Naive thymus-derived CD4-positive, alpha-beta T cell (primary cell): ENCODE measurements at regions of chr1 and their contacts with region 1.

Region 1: GRCh38 chr1:209674957-209675564 is at the start of gene G0S2:
- DNase-seq: peak in 3 of 9 donors; percentile 2 to 70 (median 15)
- ATAC-seq: peak; percentile 64
- H3K4me3 ChIP-seq: peak within 1 kb of the TSS; percentile 40
- H3K4me3 Mint-ChIP-seq: peak within 1 kb of the TSS; percentile 47 to 88 (median 80)
- H3K27ac ChIP-seq: no peak within 1 kb of the TSS
- H3K27ac Mint-ChIP-seq: peak within 1 kb of the TSS in 2 of 9 donors; percentile 36 to 73
- H3K4me1 ChIP-seq: peaks cover 10 to 18% of the 10 kb centered on the region in 2 donors
- H3K4me1 Mint-ChIP-seq: peaks cover 27 to 74% (median 43%) of the 10 kb centered on the region in 7 donors
- H3K27me3 ChIP-seq: no peaks in the 10 kb centered on the region
- H3K27me3 Mint-ChIP-seq: peaks cover 27 to 61% (median 55%) of the 10 kb centered on the region in 5 donors
- total RNA-seq, gene G0S2: 17.2 to 128 (median 81.1) TPM in 3 of 5 experiments, not detected in the others

Region 2: DNA sequence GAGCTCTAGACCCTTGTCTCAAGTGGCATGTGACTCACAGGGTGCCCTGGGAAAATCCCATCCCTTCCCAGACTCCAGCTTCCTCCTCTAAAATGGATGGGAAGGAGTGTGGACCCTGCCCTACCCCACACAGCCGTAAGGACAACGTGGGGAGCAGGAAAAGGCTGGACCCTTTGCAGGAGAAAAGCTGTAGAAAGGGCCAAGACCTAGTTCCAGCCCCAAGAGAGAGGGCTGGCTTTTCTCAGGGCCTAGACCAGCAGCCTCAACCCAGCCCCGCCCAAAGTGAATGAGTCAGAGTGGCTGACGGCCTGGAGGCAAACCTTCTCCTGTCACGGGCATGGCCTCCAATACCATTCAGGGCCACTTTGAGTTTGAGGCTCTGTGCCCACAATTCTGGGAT is 23.9 kb before region 1 on chr1:
- CTCF ChIA-PET with region 1: no interaction called
- POLR2A ChIA-PET with region 1: no interaction called
- intact Hi-C with region 1: loop called in 1 of 2 experiments (anchors 2 kb)
- DNase-seq: peak in 1 of 9 donors; percentile 72
- ATAC-seq: peak; percentile 82
- H3K4me3 ChIP-seq: no peak overlapping the region
- H3K4me3 Mint-ChIP-seq: peak overlapping the region in 1 of 10 donors; percentile 50
- H3K27ac ChIP-seq: no peak overlapping the region
- H3K27ac Mint-ChIP-seq: peak overlapping the region in 2 of 9 donors; percentile 12 to 88
- H3K4me1 ChIP-seq: no peaks in the 10 kb centered on the region
- H3K4me1 Mint-ChIP-seq: peaks cover 11 to 69% (median 16%) of the 10 kb centered on the region in 7 donors
- H3K27me3 ChIP-seq: no peaks in the 10 kb centered on the region
- H3K27me3 Mint-ChIP-seq: no peaks in the 10 kb centered on the region

Region 3: DNA sequence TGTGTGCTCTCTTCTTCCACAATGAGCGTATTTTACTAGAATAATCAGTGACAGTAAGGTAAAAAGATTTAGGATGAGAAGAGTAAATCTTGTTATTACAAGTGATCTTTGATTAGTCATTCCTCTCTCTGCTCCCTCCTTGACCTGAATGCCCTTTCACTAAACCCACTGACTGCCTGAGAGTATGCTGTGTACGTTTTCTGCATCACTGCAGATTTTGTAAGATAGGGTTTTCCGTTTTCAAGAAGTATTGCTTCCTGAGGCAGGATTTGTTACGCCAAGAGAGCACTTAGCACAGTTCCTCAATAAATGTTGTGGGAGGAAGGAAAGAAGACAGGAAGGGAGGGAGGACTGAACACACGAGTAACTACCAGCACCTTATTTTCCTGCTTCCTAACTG is 15.2 kb before region 1 on chr1:
- CTCF ChIA-PET with region 1: no interaction called
- POLR2A ChIA-PET with region 1: no interaction called
- intact Hi-C with region 1: loop called in 1 of 2 experiments (anchors 1 kb)
- DNase-seq: no peak
- ATAC-seq: peak; percentile 68
- H3K4me3 ChIP-seq: no peak overlapping the region
- H3K4me3 Mint-ChIP-seq: peak overlapping the region in 1 of 10 donors; percentile 50
- H3K27ac ChIP-seq: no peak overlapping the region
- H3K27ac Mint-ChIP-seq: peak overlapping the region in 2 of 9 donors; percentile 48 to 61
- H3K4me1 ChIP-seq: no peaks in the 10 kb centered on the region
- H3K4me1 Mint-ChIP-seq: peaks cover 0 to 23% (median 11%) of the 10 kb centered on the region in 7 donors
- H3K27me3 ChIP-seq: no peaks in the 10 kb centered on the region
- H3K27me3 Mint-ChIP-seq: peaks cover 0 to 5% (median 0%) of the 10 kb centered on the region in 5 donors

Region 4: DNA sequence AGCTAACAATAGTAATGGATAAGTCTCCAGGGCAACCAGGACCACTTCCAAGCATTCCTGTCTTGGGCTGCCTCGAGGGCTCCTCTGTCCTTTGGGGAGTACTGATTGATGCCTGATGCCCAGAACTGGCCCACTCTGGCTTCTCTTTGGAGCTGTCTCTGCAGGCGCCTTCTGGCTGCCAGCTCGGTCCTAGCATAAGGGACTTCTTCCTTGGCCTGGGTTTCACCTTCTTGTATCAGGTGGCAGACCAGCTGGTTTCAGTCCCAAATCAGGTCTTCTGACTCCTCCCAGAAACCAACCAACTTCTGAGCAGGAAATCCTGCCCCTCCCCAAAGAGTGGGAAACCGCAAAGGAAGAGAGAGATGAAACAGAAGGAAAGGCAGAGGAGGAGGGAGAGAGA is 10.8 kb after region 1 on chr1:
- CTCF ChIA-PET with region 1: interaction called, 8 read pairs
- POLR2A ChIA-PET with region 1: no interaction called
- intact Hi-C with region 1: loop called in 1 of 2 experiments (anchors 2 kb)
- DNase-seq: peak in 7 of 9 donors; percentile 6 to 44 (median 23)
- ATAC-seq: peak; percentile 49
- H3K4me3 ChIP-seq: peak overlapping the region; percentile 8
- H3K4me3 Mint-ChIP-seq: peak overlapping the region; percentile 52 to 91 (median 72)
- H3K27ac ChIP-seq: no peak overlapping the region
- H3K27ac Mint-ChIP-seq: peak overlapping the region; percentile 6 to 79 (median 48)
- H3K4me1 ChIP-seq: peaks cover 15 to 39% of the 10 kb centered on the region in 2 donors
- H3K4me1 Mint-ChIP-seq: peaks cover 25 to 57% (median 42%) of the 10 kb centered on the region in 7 donors
- H3K27me3 ChIP-seq: no peaks in the 10 kb centered on the region
- H3K27me3 Mint-ChIP-seq: peaks cover 0 to 15% (median 7%) of the 10 kb centered on the region in 5 donors